SK-N-SH (cell line): ENCODE measurements at regions of chr17 and their contacts with region 1.

Region 1: GRCh38 chr17:37650419-37651003 is 7.3 kb upstream of the DDX52 start:
- DNase-seq: peak; percentile 54
- H3K4me3 ChIP-seq: no peak overlapping the region; a peak in 1 of 4 replicates
- H3K27ac ChIP-seq: no peak overlapping the region
- H3K4me1 ChIP-seq: no peaks in the 10 kb centered on the region; a peak in 1 of 4 replicates
- H3K27me3 ChIP-seq: no peaks in the 10 kb centered on the region
- CTCF ChIP-seq: peak; percentile 77
- EP300 ChIP-seq: no peak
- RAD21 ChIP-seq: peak; percentile 83

Region 2: GRCh38 chr17:37667039-37667438 is 16.5 kb after region 1 on chr17:
- CTCF ChIA-PET with region 1: interaction called, 11 read pairs
- POLR2A ChIA-PET with region 1: no interaction called
- DNase-seq: no peak
- H3K4me3 ChIP-seq: no peak overlapping the region
- H3K27ac ChIP-seq: no peak overlapping the region
- H3K4me1 ChIP-seq: peaks cover 0 to 6% of the 10 kb centered on the region in 2 experiments; a peak in 1 of 4 replicates
- H3K27me3 ChIP-seq: no peaks in the 10 kb centered on the region
- CTCF ChIP-seq: no peak
- EP300 ChIP-seq: no peak
- RAD21 ChIP-seq: no peak

Region 3: DNA sequence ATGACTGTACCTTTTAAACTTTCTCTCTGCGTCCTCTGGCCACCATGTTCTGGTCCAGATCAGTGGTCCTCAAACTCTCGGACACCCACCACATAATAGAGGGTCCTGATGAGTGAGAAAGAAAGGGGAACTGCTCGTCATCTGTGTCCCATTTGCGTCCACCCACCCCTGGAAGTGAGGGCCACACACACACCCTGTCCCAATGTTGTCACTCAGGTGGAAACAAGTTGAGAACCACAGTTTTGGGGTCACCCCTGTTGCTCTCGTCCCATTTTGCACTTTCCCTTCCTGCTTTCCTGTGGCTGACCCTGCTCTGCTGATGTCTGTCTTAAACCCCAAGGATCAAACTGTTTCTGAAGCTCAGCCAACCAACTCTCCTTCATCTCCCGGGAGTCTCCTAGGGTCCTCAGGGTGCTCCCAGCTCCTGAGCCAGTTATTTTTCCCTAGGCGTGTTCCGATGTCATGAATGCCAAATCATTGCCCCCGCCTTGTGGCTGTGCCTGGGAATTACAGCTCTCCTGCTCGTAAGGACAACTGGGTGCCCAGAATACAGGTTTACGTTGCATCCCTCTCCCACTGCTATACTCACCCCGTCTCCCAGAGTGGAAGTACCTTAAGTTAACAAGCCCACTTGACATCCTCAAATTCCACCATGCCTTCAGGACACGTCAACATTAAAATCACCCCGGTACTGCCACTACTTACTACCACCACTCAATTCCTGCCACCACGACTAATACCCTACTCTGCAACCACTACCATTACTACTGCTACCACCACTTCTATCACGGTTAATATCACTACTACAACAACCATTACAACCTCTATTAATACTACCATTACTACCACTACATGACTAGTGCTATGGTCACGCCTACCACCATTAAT is 120.4 kb after region 1 on chr17:
- CTCF ChIA-PET with region 1: interaction called, 15 read pairs
- POLR2A ChIA-PET with region 1: no interaction called
- DNase-seq: peak; percentile 45
- H3K4me3 ChIP-seq: no peak overlapping the region
- H3K27ac ChIP-seq: no peak overlapping the region
- H3K4me1 ChIP-seq: no peaks in the 10 kb centered on the region
- H3K27me3 ChIP-seq: 0 out of 2 replicates have a peak, but pooled peaks cover 3% of the 10 kb centered on the region
- CTCF ChIP-seq: peak; percentile 73
- EP300 ChIP-seq: no peak
- RAD21 ChIP-seq: peak; percentile 69

Region 4: GRCh38 chr17:37781451-37781850 is 130.9 kb after region 1 on chr17:
- CTCF ChIA-PET with region 1: no interaction called
- POLR2A ChIA-PET with region 1: no interaction called
- DNase-seq: no peak
- H3K4me3 ChIP-seq: no peak overlapping the region
- H3K27ac ChIP-seq: no peak overlapping the region
- H3K4me1 ChIP-seq: no peaks in the 10 kb centered on the region
- H3K27me3 ChIP-seq: no peaks in the 10 kb centered on the region
- CTCF ChIP-seq: no peak
- EP300 ChIP-seq: no peak
- RAD21 ChIP-seq: no peak

Region 5: DNA sequence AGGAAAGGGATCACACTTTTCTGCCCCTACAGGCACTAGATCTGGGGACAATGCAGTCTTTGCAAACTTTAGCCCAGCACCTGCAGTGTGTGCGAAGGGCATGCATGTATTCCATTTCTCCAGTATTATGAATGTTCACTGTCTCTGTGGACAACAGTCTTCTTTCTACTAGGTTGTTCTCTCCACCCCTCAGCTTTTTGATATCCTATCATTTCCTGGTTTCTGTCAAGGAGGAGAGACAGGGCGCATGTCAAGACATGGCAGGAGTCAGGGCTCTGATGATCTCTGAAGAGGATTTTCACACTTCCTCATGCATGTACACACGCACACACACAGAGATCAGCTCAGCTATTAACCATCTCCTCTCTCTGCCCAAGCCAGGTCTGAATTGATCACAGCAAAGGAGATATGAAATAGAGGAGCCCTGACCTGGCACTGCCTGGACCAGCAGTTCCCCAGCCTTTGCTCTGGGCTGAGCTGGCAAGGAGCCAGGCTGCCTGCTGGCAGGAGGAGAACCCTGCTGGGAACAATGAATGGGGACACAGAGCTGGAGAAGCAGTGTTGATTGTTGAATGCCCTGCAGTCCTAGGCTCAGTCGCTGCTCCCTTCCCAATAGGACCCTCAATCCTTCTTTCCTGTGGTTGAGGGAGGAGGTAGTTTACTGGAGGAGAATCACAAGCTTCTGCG is 690.7 kb after region 1 on chr17:
- CTCF ChIA-PET with region 1: no interaction called
- POLR2A ChIA-PET with region 1: no interaction called
- DNase-seq: peak; percentile 84
- H3K4me3 ChIP-seq: no peak overlapping the region
- H3K27ac ChIP-seq: peak overlapping the region in 1 of 2 experiments; percentile 47; a peak in 2 of 4 replicates
- H3K4me1 ChIP-seq: peaks cover 0 to 11% of the 10 kb centered on the region in 2 experiments; a peak in 1 of 4 replicates
- H3K27me3 ChIP-seq: no peaks in the 10 kb centered on the region
- CTCF ChIP-seq: no peak
- EP300 ChIP-seq: no peak
- RAD21 ChIP-seq: no peak